Heart left ventricle (tissue), 16 donors: ENCODE measurements at regions of chr9 and their contacts with region 1.

Region 1: GRCh38 chr9:87080512-87081264 is 133.4 kb upstream of the GAS1 start:
- DNase-seq: no peak
- ATAC-seq: peak; percentile 42 to 85 (median 63)
- H3K4me3 ChIP-seq: no peak overlapping the region
- H3K27ac ChIP-seq: peak overlapping the region in 2 of 12 donors; percentile 33 to 44
- H3K4me1 ChIP-seq: peaks cover 0 to 10% (median 4%) of the 10 kb centered on the region in 12 donors
- H3K27me3 ChIP-seq: no peaks in the 10 kb centered on the region
- CTCF ChIP-seq: peak in 2 of 12 donors; percentile 8 to 13
- POLR2A ChIP-seq: no peak

Region 2: DNA sequence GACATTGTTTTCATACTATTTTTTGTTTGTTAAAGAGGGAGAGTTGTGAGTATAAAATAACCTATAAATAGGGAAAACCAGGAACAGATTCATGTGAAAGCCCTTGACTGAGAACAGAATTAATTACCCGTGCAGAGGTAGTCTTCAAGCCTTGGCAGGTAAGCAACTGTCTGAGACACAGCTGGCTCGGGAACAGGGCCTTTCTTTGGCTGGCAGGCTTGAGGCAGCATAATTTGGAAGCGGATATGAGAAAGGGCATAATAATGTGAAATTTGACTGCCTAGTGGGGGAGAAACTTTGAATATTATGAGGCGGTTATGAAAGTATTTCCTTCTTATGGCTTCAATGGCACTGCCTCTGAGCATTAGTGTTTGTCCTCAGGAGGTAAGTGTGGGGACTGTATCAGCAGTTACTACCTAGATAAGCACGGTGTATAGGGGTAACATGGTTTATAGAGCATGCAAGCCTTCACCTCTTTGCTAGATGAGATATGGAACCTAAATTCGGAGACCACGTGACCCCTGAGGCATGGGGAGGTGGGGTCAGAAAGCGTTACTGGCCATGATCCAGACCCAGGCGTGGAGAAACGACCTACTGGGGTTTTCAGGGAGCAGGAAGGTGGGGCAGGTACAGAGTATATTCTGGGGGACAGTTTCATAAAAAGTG is 76.8 kb after region 1 on chr9:
- intact Hi-C with region 1: loop called in 1 of 10 experiments (anchors 10 kb)
- DNase-seq: no peak
- ATAC-seq: peak in 2 of 4 donors; percentile 13 to 53
- H3K4me3 ChIP-seq: no peak overlapping the region
- H3K27ac ChIP-seq: no peak overlapping the region
- H3K4me1 ChIP-seq: peaks cover 0 to 17% (median 0%) of the 10 kb centered on the region in 12 donors
- H3K27me3 ChIP-seq: no peaks in the 10 kb centered on the region
- CTCF ChIP-seq: no peak
- POLR2A ChIP-seq: no peak

Region 3: GRCh38 chr9:87167582-87167981 is 86.9 kb after region 1 on chr9:
- intact Hi-C with region 1: no loop called
- DNase-seq: no peak
- ATAC-seq: no peak
- H3K4me3 ChIP-seq: no peak overlapping the region
- H3K27ac ChIP-seq: no peak overlapping the region
- H3K4me1 ChIP-seq: no peaks in the 10 kb centered on the region
- H3K27me3 ChIP-seq: no peaks in the 10 kb centered on the region
- CTCF ChIP-seq: no peak
- POLR2A ChIP-seq: no peak